Naive thymus-derived CD4-positive, alpha-beta T cell (primary cell): ENCODE measurements at regions of chr2 and their contacts with region 1.

Region 1: GRCh38 chr2:23460228-23460627 is 75.2 kb downstream of the KLHL29 start:
- DNase-seq: no peak
- ATAC-seq: no peak
- H3K4me3 ChIP-seq: no peak overlapping the region
- H3K4me3 Mint-ChIP-seq: peak overlapping the region in 1 of 10 donors; percentile 11
- H3K27ac ChIP-seq: no peak overlapping the region
- H3K27ac Mint-ChIP-seq: peak overlapping the region in 1 of 9 donors; percentile 70
- H3K4me1 ChIP-seq: peaks cover 0 to 15% of the 10 kb centered on the region in 2 donors
- H3K4me1 Mint-ChIP-seq: peaks cover 0 to 10% (median 2%) of the 10 kb centered on the region in 7 donors
- H3K27me3 ChIP-seq: no peaks in the 10 kb centered on the region
- H3K27me3 Mint-ChIP-seq: peaks cover 0 to 16% (median 8%) of the 10 kb centered on the region in 5 donors

Region 2: DNA sequence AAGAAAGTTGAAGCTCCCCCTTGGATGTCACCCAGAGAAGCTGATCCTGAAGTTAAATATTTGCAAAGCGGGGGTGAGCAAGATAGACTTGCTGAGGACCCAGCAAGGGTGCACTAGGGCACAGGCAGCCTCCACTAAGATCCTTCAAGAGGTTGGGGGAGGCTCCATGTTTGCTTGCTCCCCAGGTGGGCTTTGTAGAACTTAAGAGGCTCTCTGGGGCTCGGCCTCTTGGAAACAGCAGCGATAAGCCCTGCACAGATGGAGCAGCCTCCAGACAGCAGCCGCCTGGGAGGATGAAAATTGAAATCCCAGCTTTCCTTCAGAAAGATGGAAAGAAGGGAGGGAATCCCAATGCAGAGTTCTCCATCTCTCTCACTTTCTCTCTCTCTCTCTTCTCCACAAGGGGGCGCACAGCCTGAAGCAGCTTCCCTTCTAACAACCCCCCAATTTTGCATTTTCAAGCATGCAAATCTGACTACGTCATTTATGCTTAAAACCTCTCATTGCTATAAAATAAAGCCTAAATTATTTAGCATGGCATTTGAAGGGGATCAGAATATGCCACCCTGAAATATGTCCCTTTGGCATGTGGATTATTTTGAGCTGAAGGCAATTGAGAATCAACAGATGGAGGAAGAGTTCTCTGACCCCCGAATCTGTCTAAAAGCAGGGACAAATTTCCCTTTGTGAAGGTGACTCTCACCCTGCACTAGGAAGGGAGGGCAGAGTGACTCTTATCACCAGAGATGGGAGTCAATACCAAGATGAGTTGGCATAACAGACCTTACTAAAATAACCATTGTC is 260.9 kb before region 1 on chr2:
- CTCF ChIA-PET with region 1: no interaction called
- POLR2A ChIA-PET with region 1: no interaction called
- intact Hi-C with region 1: loop called in 1 of 2 experiments (anchors 5 kb)
- DNase-seq: no peak
- ATAC-seq: no peak
- H3K4me3 ChIP-seq: no peak overlapping the region
- H3K4me3 Mint-ChIP-seq: no peak overlapping the region
- H3K27ac ChIP-seq: no peak overlapping the region
- H3K27ac Mint-ChIP-seq: no peak overlapping the region
- H3K4me1 ChIP-seq: no peaks in the 10 kb centered on the region
- H3K4me1 Mint-ChIP-seq: no peaks in the 10 kb centered on the region
- H3K27me3 ChIP-seq: no peaks in the 10 kb centered on the region
- H3K27me3 Mint-ChIP-seq: peaks cover 0 to 31% (median 11%) of the 10 kb centered on the region in 5 donors

Region 3: DNA sequence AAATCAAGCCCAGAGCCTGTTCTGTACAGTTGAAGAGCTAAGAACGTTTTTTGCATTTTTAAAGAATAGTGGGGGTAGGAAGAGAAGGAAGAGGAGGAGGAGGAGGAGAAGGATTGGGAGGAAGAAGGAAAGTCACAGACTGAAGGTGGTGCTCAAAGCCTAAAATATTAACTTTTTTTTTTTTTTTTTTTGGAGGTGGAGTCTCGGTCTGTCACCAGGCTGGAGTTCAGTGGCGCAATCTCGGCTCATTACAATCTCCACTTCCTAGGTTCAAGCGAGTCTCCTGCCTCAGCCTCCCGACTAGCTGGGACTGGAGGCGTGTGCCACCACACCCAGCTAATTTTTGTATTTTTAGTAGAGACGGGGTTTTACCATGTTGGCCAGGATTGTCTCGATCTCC is 93.5 kb before region 1 on chr2:
- CTCF ChIA-PET with region 1: no interaction called
- POLR2A ChIA-PET with region 1: no interaction called
- intact Hi-C with region 1: loop called in 1 of 2 experiments (anchors 1 kb)
- DNase-seq: peak in 1 of 9 donors; percentile 8
- ATAC-seq: no peak
- H3K4me3 ChIP-seq: no peak overlapping the region
- H3K4me3 Mint-ChIP-seq: no peak overlapping the region
- H3K27ac ChIP-seq: no peak overlapping the region
- H3K27ac Mint-ChIP-seq: no peak overlapping the region
- H3K4me1 ChIP-seq: no peaks in the 10 kb centered on the region
- H3K4me1 Mint-ChIP-seq: peaks cover 0 to 5% (median 2%) of the 10 kb centered on the region in 7 donors
- H3K27me3 ChIP-seq: no peaks in the 10 kb centered on the region
- H3K27me3 Mint-ChIP-seq: peaks cover 12 to 51% (median 35%) of the 10 kb centered on the region in 5 donors